CD14-positive monocyte (primary cell): ENCODE measurements at regions of chr5 and their contacts with region 1.

Region 1: GRCh38 chr5:141420855-141421496 is at the start of gene PCDHGA11:
- DNase-seq: peak; percentile 56 to 70 (median 67)
- H3K4me3 ChIP-seq: peak within 1 kb of the TSS; percentile 37 to 77 (median 54)
- H3K4me3 Mint-ChIP-seq: peak within 1 kb of the TSS; percentile 84 to 93
- H3K27ac ChIP-seq: no peak within 1 kb of the TSS
- H3K27ac Mint-ChIP-seq: peak within 1 kb of the TSS in 2 of 7 donors; percentile 41 to 73
- H3K4me1 ChIP-seq: peaks cover 19 to 21% of the 10 kb centered on the region in 2 donors
- H3K4me1 Mint-ChIP-seq: peaks cover 32% of the 10 kb centered on the region
- H3K27me3 ChIP-seq: peaks cover 80 to 100% of the 10 kb centered on the region in 2 donors
- H3K27me3 Mint-ChIP-seq: peaks cover 75 to 88% (median 85%) of the 10 kb centered on the region in 3 donors
- CTCF ChIP-seq: peak; percentile 86
- polyA plus RNA-seq, gene PCDHGA11: not detected

Region 2: DNA sequence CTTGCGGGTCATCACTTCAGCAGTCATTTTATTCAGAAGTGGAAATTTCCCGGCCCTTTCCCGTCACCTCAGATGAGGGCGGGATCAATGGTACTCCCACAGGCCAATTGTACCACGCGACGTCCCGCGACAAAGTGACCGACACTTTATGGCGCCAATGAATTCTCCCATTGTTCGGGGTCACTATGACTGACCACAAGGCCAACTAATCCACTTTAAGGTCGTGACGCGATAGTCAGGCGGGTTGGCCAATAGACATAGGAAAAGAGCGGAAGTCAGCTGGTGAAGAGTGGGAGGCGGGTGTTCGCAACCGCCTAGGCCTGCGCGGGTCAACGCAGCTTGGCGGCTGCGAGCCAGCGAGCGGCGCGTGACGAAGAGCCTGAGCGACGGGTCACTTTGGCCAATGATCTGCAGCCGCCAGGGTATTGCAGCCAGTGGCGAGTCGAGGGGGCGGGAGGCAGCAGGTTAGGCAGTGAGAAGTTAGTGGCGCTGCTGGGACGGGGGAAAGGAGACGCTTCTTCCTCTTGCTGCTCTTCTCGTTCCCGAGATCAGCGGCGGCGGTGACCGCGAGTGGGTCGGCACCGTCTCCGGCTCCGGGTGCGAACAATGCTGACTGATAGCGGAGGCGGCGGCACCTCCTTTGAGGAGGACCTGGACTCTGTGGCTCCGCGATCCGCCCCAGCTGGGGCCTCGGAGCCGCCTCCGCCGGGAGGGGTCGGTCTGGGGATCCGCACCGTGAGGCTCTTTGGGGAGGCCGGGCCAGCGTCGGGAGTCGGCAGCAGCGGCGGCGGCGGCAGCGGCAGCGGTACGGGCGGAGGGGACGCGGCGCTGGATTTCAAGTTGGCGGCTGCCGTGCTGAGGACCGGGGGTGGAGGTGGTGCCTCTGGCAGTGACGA is 1019.4 kb before region 1 on chr5 and contains the start of gene ANKHD1:
- intact Hi-C with region 1: no loop called
- DNase-seq: peak; percentile 100
- H3K4me3 ChIP-seq: peak within 1 kb of the TSS; percentile 67 to 87 (median 86)
- H3K4me3 Mint-ChIP-seq: no peak within 1 kb of the TSS
- H3K27ac ChIP-seq: peak within 1 kb of the TSS; percentile 94
- H3K27ac Mint-ChIP-seq: peak within 1 kb of the TSS in 2 of 7 donors; percentile 92 to 93
- H3K4me1 ChIP-seq: peaks cover 23 to 32% of the 10 kb centered on the region in 2 donors
- H3K4me1 Mint-ChIP-seq: peaks cover 32% of the 10 kb centered on the region
- H3K27me3 ChIP-seq: no peaks in the 10 kb centered on the region
- H3K27me3 Mint-ChIP-seq: no peaks in the 10 kb centered on the region
- CTCF ChIP-seq: no peak
- polyA plus RNA-seq, gene ANKHD1: 29.0 to 110 (median 43.6) TPM

Region 3: DNA sequence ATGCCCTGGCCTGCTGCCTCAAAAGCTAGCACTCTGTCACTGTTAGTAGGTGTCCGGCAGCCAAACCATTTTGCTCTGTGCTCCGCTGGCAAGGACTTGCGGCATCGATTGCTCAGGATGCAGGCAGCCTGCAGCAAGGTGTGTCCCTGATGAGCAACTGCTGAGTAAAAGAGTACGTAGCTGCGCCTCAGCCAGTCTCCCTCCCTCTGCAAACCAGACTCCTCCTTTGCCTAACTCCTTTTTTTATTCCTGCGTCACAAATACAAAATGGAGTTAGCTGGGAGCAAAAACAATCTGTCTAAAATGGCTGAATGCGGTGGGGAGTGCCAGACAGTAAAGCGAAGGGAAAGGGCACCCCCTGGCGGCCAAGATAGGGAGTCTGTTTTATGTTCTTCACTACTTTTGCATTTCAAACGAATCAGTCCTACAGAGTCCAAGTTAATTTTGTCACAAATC is 136.7 kb after region 1 on chr5:
- intact Hi-C with region 1: loop called (anchors 5 kb)
- DNase-seq: peak; percentile 50 to 65 (median 51)
- H3K4me3 ChIP-seq: no peak overlapping the region
- H3K4me3 Mint-ChIP-seq: no peak overlapping the region
- H3K27ac ChIP-seq: no peak overlapping the region
- H3K27ac Mint-ChIP-seq: peak overlapping the region in 5 of 7 donors; percentile 18 to 88 (median 50)
- H3K4me1 ChIP-seq: no peaks in the 10 kb centered on the region
- H3K4me1 Mint-ChIP-seq: peaks cover 3% of the 10 kb centered on the region
- H3K27me3 ChIP-seq: no peaks in the 10 kb centered on the region
- H3K27me3 Mint-ChIP-seq: no peaks in the 10 kb centered on the region
- CTCF ChIP-seq: peak; percentile 88